MCF 10A (cell line): ENCODE measurements at regions of chr12 and their contacts with region 1.

Region 1: DNA sequence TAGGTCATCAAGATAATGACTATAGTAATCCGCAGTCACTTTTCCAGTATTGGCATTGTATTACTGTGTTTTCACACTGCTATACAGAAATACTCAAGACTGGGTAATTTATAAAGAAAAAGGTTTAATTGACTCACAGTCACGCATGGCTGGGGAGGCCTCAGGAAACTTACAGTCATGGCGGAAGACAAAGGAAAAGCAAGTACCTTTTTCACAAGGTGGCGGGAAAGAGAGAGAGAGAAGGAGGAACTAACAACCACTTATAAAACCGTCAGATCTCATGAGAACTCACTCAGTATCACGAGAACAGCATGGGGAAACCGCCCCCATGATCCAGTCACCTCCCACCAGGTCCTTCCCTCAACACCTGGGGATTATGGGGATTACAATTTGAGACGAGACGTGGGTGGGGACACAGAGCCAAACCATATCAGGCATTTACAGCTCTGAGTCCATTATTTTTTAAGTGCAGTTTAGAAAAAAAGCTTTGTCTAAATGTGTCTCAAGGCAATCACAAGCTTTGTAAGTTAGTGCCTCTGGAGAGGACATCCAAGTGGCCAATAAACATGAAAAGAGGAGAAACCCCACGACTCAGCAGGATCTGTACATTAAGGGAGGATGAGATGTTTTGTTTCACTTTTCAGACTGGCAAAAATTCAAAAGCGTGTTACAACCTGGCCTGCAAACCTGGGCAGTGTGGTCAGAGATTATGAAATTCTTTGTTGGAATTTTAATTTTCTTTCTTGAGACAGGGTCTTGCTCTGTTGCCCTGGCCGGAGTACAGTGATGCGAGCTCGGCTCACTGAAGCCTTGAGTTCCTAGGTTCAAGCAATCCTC is 82.0 kb downstream of the DNAH10 start:
- DNase-seq: peak; percentile 63
- H3K4me3 Mint-ChIP-seq: peak overlapping the region; percentile 41
- H3K27ac Mint-ChIP-seq: no peak overlapping the region
- H3K4me1 Mint-ChIP-seq: peaks cover 9% of the 10 kb centered on the region
- H3K27me3 Mint-ChIP-seq: no peaks in the 10 kb centered on the region
- CTCF ChIP-seq: no peak

Region 2: DNA sequence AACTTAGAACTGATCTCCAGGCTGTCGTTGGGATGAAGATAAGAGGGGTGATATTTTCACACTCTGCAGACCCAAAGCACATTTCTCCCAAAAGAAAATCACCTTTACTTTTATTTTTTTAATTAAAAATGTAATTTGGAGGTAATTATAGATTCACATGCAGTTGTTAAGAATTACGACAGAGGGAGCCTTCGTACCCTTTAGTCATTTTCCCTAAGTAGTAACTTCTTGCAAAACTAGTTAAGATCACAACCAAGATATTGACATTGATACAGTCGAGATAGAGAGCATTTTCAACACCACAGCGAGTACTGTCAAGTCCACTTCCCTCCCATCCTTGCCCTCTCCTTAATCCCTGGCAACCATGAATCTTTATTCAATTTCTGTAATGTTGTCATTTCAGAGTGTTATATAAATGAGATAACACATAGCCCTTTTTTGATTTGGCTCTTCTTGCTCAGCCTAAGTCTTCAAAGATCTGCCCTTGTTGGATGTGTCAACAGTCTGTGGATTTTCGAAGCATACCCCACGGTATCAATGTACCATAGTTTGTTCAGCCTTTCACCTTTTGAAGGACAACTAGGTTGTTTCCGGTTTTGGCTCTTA is 42.5 kb before region 1 on chr12:
- CTCF ChIA-PET with region 1: no interaction called
- POLR2A ChIA-PET with region 1: no interaction called
- intact Hi-C with region 1: loop called (anchors 1 kb)
- DNase-seq: peak; percentile 50
- H3K4me3 Mint-ChIP-seq: no peak overlapping the region
- H3K27ac Mint-ChIP-seq: no peak overlapping the region
- H3K4me1 Mint-ChIP-seq: peaks cover 5% of the 10 kb centered on the region
- H3K27me3 Mint-ChIP-seq: peaks cover 3% of the 10 kb centered on the region
- CTCF ChIP-seq: peak; percentile 62